ENCODE measurements at regions of chr1 and their contacts with region 1.

Region 1: GRCh38 chr1:93447516-93448291 is at the start of gene FNBP1L:
- DNase-seq: peak; percentile 75 to 85 (median 81)
- H3K4me3 ChIP-seq: peak within 1 kb of the TSS; percentile 89
- H3K27ac ChIP-seq: peak within 1 kb of the TSS; percentile 64 to 74
- H3K4me1 ChIP-seq: no peaks in the 10 kb centered on the region
- H3K27me3 ChIP-seq: no peaks in the 10 kb centered on the region
- CTCF ChIP-seq: no peak
- EP300 ChIP-seq: no peak
- POLR2A ChIP-seq: peak; percentile 32
- total RNA-seq, gene FNBP1L: 16.2 to 27.6 (median 18.4) TPM

Region 2: GRCh38 chr1:93615582-93616150 is 168.0 kb after region 1 on chr1:
- intact Hi-C with region 1: loop called in 1 of 4 experiments (anchors 10 kb)
- DNase-seq: no peak
- H3K4me3 ChIP-seq: no peak overlapping the region
- H3K27ac ChIP-seq: no peak overlapping the region
- H3K4me1 ChIP-seq: peaks cover 5% of the 10 kb centered on the region
- H3K27me3 ChIP-seq: no peaks in the 10 kb centered on the region
- CTCF ChIP-seq: no peak
- EP300 ChIP-seq: no peak
- POLR2A ChIP-seq: no peak

Region 3: DNA sequence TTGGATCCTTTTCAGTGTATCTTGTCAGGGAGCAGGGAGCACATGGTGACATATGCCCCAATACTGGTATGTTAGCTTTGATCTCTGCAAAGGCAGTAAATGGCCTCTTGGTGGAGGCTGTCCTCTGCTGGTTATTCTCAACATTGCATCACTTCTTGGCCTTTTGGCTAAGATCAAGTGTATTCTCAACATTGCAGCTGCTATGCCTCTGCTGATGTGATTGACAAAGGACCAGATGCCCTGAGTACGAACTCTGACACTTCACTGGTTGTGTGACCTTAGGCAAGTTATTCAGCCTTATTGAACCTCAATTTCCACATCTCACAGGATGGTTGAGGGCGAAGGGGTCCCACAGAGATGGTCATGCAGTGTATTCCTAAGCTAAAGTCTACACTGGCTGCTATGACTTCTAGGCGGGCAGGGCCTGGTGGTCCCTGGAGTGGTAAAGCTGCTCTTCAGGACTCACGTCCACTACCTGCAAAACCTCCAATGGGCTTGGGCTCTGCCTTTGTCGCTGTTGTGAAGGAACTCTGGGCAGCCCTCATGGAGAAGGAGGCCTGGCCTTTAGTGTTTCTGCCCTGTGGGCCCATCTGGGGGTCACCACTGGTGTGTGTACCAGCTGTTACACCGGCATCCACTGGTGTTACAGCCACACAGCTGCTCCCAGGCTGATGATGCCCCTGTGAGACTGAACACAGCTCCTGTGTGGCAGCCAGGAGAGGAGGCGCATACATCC is 366.5 kb after region 1 on chr1:
- intact Hi-C with region 1: loop called in 1 of 4 experiments (anchors 10 kb)
- DNase-seq: peak; percentile 32 to 67 (median 39)
- H3K4me3 ChIP-seq: no peak overlapping the region
- H3K27ac ChIP-seq: no peak overlapping the region
- H3K4me1 ChIP-seq: peaks cover 2% of the 10 kb centered on the region
- H3K27me3 ChIP-seq: no peaks in the 10 kb centered on the region
- CTCF ChIP-seq: peak; percentile 86 to 93 (median 92)
- EP300 ChIP-seq: no peak
- POLR2A ChIP-seq: no peak

Region 4: DNA sequence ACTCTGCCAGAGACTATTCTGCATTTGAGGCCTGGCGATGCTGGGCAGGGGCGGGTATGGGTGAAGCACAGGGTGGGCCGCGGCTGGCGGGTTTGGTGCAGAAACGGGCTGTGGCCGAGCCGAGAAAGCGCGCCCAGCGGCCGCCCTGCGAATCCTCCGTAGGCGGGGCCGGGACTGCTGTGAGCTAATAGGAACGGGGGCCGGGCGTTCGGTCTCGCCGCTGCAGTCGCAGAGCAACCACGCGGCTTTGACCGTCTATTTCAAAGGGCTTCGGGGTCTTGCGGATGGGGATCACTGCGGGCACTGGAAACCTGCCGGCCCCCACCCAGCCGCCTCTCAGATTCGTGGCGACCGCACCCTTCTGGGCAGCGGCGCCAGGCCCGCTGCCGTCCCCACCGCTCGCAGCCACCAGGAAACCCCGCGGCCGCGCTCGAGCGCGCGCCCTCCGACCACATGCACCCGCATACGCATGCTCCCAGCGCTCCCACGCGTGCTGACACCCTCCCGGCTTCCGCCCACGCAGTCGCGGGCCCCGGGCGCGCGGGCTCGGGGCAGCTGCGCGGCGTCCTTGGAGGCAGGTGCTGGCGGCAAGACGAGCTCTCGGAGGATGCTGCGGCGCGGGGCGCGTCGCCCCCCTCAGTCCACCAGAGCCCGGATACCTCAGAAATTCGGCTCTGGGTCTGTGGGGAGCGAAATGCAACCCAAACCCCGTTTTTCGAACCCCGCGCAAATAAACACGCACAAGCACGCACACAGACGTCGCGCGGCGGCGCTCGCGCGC is 398.7 kb after region 1 on chr1:
- intact Hi-C with region 1: loop called in 1 of 4 experiments (anchors 10 kb)
- DNase-seq: peak; percentile 86 to 91 (median 89)
- H3K4me3 ChIP-seq: peak overlapping the region; percentile 88
- H3K27ac ChIP-seq: peak overlapping the region; percentile 97 to 99
- H3K4me1 ChIP-seq: peaks cover 4% of the 10 kb centered on the region
- H3K27me3 ChIP-seq: no peaks in the 10 kb centered on the region
- CTCF ChIP-seq: peak in 2 of 3 donors; percentile 20 to 37
- EP300 ChIP-seq: no peak
- POLR2A ChIP-seq: peak; percentile 77

Region 5: DNA sequence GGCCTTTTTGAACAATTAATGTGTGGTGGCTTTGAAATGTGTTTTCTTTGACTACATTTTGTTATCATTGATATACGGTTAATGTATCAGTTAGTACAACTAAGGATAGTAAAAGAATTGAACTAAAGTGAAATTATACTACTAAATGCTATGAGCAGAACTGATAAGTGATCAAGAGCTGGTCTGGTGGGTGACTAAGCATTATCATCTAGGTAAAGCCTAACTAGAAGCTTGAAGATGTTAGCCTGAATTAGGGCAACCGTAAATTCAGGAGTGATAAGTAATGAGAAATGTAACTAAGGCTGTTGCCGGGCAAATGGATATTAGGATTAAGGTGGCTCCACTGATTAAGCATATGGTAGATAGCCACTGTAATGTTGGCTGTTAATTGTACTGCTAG is 477.5 kb after region 1 on chr1:
- intact Hi-C with region 1: no loop called
- DNase-seq: no peak
- H3K4me3 ChIP-seq: no peak overlapping the region
- H3K27ac ChIP-seq: no peak overlapping the region
- H3K4me1 ChIP-seq: no peaks in the 10 kb centered on the region
- H3K27me3 ChIP-seq: no peaks in the 10 kb centered on the region
- CTCF ChIP-seq: no peak
- EP300 ChIP-seq: no peak
- POLR2A ChIP-seq: no peak

Region 6: GRCh38 chr1:94025383-94026340 is 578.0 kb after region 1 on chr1:
- intact Hi-C with region 1: loop called in 1 of 4 experiments (anchors 5 kb)
- DNase-seq: peak in 1 of 5 donors; percentile 51
- H3K4me3 ChIP-seq: no peak overlapping the region
- H3K27ac ChIP-seq: no peak overlapping the region
- H3K4me1 ChIP-seq: peaks cover 7% of the 10 kb centered on the region
- H3K27me3 ChIP-seq: no peaks in the 10 kb centered on the region
- CTCF ChIP-seq: peak; percentile 60 to 83 (median 81)
- EP300 ChIP-seq: no peak
- POLR2A ChIP-seq: no peak

Measured in ovary (tissue), 10 donors.